ENCODE measurements at regions of chr2 and their contacts with region 1.

Region 1: DNA sequence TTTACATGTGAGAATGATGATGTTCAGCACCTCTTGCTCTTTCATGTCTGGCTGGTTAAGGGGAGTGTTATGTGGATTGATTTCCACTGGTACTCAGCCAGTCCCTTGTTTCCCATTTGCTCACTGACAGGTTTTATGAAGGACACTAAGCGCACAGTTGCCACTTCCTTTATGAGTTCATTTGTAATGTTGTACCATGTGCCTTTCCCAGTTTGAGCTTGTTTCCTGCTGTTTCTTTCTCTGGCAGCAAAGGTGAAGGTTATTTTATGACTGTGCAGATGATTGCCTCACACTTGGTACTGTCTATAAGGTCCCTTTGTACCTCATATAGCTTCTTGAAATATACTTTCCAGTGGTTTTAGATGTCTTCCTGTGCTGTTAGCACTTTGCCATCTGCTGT is 1700.5 kb upstream of the TMEFF2 start:
- DNase-seq: peak; percentile 4
- H3K4me3 ChIP-seq: no peak overlapping the region
- H3K27ac ChIP-seq: no peak overlapping the region
- H3K4me1 ChIP-seq: no peaks in the 10 kb centered on the region
- H3K27me3 ChIP-seq: no peaks in the 10 kb centered on the region
- CTCF ChIP-seq: no peak

Region 2: DNA sequence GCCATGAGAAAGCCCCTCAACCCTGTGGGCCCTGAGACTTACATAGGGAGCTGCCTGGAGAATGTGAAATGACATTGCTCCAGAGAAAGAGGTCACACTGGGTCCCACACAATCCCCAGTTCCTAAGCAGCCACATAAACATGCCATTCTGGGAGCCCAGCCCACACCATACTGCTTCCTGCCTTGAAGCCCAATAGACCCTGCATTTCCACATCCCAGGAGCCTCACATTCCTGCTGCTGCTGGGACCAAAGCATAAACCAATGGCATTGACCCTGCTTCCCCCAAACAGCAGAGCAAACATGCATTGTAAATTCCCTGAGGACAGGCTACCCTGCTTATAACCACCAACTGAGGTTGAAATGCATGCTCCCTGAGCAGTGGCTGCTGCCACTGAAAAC is 644.2 kb after region 1 on chr2:
- CTCF ChIA-PET with region 1: no interaction called
- POLR2A ChIA-PET with region 1: no interaction called
- intact Hi-C with region 1: loop called (anchors 10 kb)
- DNase-seq: no peak
- H3K4me3 ChIP-seq: no peak overlapping the region
- H3K27ac ChIP-seq: no peak overlapping the region
- H3K4me1 ChIP-seq: no peaks in the 10 kb centered on the region
- H3K27me3 ChIP-seq: no peaks in the 10 kb centered on the region
- CTCF ChIP-seq: no peak

Region 3: DNA sequence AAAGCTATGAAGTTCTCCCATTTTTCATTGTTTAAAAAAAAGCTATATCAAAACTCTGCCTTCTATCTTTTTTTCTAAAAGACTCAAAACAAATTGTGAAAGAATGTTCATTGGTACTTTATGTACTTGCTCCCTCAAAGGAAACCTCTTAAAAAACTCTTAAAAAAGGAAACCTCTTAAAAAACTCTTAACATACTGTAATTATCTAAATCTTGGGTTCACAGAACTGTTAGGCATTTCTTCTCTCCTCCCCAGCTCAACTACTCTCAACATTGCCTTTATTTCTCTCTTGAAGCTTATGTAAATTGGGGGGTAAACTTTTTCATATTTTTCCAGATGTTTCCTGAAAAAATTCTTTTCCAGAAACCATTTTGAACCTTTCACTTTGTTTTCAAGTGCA is 1431.3 kb after region 1 on chr2:
- CTCF ChIA-PET with region 1: no interaction called
- POLR2A ChIA-PET with region 1: interaction called, 11 read pairs
- intact Hi-C with region 1: no loop called
- DNase-seq: no peak
- H3K4me3 ChIP-seq: no peak overlapping the region
- H3K27ac ChIP-seq: no peak overlapping the region
- H3K4me1 ChIP-seq: no peaks in the 10 kb centered on the region
- H3K27me3 ChIP-seq: no peaks in the 10 kb centered on the region
- CTCF ChIP-seq: no peak

Measured in A673 (cell line).